ENCODE measurements at regions of chr19 and their contacts with region 1.

Region 1: DNA sequence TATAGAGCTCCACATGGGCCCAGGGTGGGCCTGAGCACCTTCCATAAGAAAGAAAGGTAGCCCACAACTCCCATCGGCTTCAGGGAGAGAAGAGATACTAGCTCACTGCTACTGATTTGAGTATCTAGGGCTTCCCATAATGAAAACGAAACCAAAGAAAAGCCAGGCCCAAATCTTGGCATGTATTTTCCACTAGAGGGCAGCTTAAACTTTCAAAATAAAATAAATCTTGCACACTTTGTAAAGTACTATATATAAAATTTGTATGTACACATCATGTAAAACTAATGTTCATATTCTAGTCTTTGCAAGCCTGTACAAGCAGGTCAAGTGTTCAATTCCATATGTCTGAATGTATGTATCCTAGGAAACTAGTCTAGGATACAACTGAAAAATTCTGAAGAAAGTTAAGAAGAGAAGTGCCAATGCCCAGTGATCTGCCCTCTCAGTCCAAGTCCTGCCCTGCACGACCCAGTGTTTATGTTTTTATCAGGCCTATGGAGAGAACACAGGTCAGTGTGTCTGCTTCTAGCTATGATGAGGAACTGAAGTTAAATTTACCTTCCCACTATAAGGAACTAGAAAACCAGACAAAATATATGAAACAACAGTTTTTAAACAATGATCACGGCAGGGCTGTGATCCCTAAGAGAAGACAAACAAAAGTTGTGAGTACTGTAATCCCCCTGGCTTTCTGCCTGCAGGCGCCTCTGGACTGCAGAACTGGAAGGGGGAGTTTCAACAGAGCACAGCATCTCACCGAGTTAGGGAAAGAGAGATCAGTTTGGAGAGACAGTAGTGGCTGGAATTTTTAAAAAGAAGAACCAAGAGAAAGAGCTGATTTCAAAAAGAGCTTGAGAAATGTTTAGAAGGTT is 475.7 kb downstream of the UQCRFS1 start:
- DNase-seq: no peak
- ATAC-seq: no peak
- H3K4me3 Mint-ChIP-seq: no peak overlapping the region
- H3K27ac Mint-ChIP-seq: no peak overlapping the region
- H3K4me1 Mint-ChIP-seq: peaks cover 4% of the 10 kb centered on the region
- H3K27me3 Mint-ChIP-seq: no peaks in the 10 kb centered on the region
- CTCF ChIP-seq: peak; percentile 55

Region 2: DNA sequence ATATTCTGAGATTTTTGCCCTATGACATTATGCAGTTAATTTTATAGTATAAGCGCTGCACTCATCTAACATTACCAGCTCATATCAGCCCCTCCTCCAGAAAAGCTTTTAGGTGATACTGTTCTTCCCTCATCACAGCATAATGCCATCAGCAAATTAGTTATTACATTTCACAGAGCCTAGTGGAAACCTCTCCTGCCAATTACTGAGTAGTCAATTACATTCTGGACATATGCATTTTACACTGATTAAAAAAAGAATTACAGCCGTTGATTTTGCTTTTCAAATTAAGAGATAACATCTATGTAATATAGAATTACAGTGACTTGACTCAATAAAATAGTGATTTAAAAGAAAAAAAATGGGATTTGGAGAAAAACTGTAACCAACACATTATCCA is 66.4 kb before region 1 on chr19:
- CTCF ChIA-PET with region 1: no interaction called
- POLR2A ChIA-PET with region 1: no interaction called
- intact Hi-C with region 1: no loop called
- DNase-seq: no peak
- ATAC-seq: no peak
- H3K4me3 Mint-ChIP-seq: no peak overlapping the region
- H3K27ac Mint-ChIP-seq: no peak overlapping the region
- H3K4me1 Mint-ChIP-seq: no peaks in the 10 kb centered on the region
- H3K27me3 Mint-ChIP-seq: no peaks in the 10 kb centered on the region
- CTCF ChIP-seq: no peak

Region 3: DNA sequence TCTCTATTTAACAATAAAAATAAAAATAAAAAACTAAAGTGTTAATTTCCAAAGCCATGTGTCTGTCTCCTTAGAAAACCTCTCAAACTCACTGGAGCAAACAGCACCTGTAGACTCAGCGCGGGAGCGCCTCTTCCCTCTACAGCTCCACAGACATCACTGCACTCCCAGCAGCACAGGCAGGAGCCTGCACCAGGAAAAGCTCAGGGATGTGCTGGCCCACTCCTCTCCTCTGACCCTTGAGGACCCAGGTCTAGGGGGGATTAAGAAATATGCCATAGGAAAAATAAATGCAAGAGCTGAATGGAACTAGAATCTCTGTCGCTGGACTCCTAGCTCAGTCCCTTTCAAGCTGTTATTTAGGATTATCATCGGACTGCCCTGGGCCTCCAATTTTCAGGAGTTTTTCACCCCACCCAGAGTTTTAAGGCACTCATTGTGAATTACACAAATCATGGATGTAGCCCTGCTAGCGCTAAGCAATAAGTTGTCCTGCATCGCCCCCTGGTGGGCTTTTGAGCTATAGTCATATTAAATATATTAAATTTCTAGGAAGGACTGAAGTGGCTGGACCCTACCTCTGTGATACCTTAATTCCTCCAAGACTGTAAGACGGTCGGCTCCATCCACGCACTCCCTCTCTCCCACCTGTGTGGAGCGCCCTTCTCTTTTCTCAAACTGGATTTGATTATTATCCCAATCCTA is 141.8 kb after region 1 on chr19:
- CTCF ChIA-PET with region 1: interaction called, 38 read pairs
- POLR2A ChIA-PET with region 1: interaction called, 3 read pairs
- intact Hi-C with region 1: loop called (anchors 5 kb)
- DNase-seq: peak; percentile 78
- ATAC-seq: no peak
- H3K4me3 Mint-ChIP-seq: no peak overlapping the region
- H3K27ac Mint-ChIP-seq: no peak overlapping the region
- H3K4me1 Mint-ChIP-seq: no peaks in the 10 kb centered on the region
- H3K27me3 Mint-ChIP-seq: peaks cover 4% of the 10 kb centered on the region
- CTCF ChIP-seq: peak; percentile 77

Measured in activated CD8-positive, alpha-beta T cell treated with anti-CD3 and anti-CD28 coated beads for 36 hours (primary cell).